CD4-positive, alpha-beta memory T cell (primary cell): ENCODE measurements at regions of chr1 and their contacts with region 1.

Region 1: DNA sequence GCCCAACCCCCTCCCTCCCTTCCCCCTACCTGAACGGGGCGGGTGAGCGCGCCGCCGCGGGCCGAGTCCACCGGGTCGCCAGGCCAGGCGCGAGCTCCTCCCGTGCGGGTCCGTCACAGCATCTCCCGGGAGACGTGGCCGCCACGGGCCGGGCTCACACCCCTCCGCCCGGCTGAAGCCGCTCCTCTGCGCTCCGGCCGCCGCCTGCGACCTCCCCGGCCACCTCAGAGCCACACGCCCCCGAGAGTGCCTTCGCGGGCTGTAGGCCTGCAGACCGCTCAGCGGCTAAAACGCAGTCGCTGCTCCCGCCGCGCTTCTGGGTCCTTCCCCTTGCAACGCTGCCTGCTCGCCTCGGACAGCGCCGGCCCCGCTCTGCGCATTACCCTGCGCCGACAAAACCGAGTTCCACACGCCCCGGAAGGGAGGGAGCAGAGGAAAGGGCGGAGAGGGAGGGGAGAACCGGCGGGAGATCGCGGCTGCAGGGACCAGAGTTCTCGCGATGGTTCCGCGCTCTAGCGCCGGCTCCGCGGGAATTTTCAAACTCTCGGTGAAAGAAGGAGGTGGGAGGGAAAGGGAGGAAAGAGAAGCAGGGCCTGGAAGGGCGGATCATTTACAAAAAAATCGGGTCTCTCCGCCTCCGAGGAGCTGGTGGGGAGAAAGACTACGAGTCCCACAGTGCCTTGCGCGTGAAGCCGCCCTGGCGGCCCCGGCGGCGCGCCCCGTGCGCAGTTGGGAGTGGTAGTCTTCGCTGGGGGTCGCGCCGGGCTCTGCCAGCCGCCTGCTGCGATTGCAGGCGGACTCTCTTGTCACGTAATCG is at the start of gene AHCTF1:
- DNase-seq: peak; percentile 95 to 97 (median 96)
- H3K4me3 ChIP-seq: peak within 1 kb of the TSS; percentile 78 to 89
- H3K4me3 Mint-ChIP-seq: peak within 1 kb of the TSS; percentile 93 to 97 (median 95)
- H3K27ac ChIP-seq: peak within 1 kb of the TSS; percentile 76
- H3K27ac Mint-ChIP-seq: peak within 1 kb of the TSS; percentile 96 to 99 (median 97)
- H3K4me1 ChIP-seq: peaks cover 37% of the 10 kb centered on the region
- H3K4me1 Mint-ChIP-seq: peaks cover 22 to 46% (median 34%) of the 10 kb centered on the region in 4 donors
- H3K27me3 ChIP-seq: no peaks in the 10 kb centered on the region
- H3K27me3 Mint-ChIP-seq: no peaks in the 10 kb centered on the region
- total RNA-seq, gene AHCTF1: 55.1 to 59.0 TPM

Region 2: GRCh38 chr1:246566128-246566812 is 365.5 kb before region 1 on chr1 and contains the starts of genes CNST and TFB2M:
- CTCF ChIA-PET with region 1: no interaction called
- POLR2A ChIA-PET with region 1: interaction called, 3 read pairs
- intact Hi-C with region 1: loop called (anchors 1 kb)
- DNase-seq: peak; percentile 89 to 93 (median 91)
- H3K4me3 ChIP-seq: peak within 1 kb of the TSS; percentile 84 to 99
- H3K4me3 Mint-ChIP-seq: peak within 1 kb of the TSS; percentile 97 to 99 (median 98)
- H3K27ac ChIP-seq: peak within 1 kb of the TSS; percentile 92
- H3K27ac Mint-ChIP-seq: peak within 1 kb of the TSS; percentile 89 to 99 (median 97)
- H3K4me1 ChIP-seq: peaks cover 61% of the 10 kb centered on the region
- H3K4me1 Mint-ChIP-seq: peaks cover 29 to 68% (median 46%) of the 10 kb centered on the region in 4 donors
- H3K27me3 ChIP-seq: no peaks in the 10 kb centered on the region
- H3K27me3 Mint-ChIP-seq: no peaks in the 10 kb centered on the region
- total RNA-seq, gene CNST: 97.8 to 103 TPM
- total RNA-seq, gene TFB2M: 8.8 to 9.6 TPM

Region 3: GRCh38 chr1:247078261-247079140 is 146.7 kb after region 1 on chr1 and contains the start of gene ZNF670:
- CTCF ChIA-PET with region 1: no interaction called
- POLR2A ChIA-PET with region 1: interaction called, 4 read pairs
- intact Hi-C with region 1: loop called (anchors 1 kb)
- DNase-seq: peak; percentile 70 to 86 (median 72)
- H3K4me3 ChIP-seq: peak within 1 kb of the TSS; percentile 67 to 73
- H3K4me3 Mint-ChIP-seq: peak within 1 kb of the TSS; percentile 89 to 94 (median 92)
- H3K27ac ChIP-seq: peak within 1 kb of the TSS; percentile 64
- H3K27ac Mint-ChIP-seq: peak within 1 kb of the TSS; percentile 75 to 91 (median 87)
- H3K4me1 ChIP-seq: peaks cover 16% of the 10 kb centered on the region
- H3K4me1 Mint-ChIP-seq: peaks cover 16 to 38% (median 23%) of the 10 kb centered on the region in 4 donors
- H3K27me3 ChIP-seq: no peaks in the 10 kb centered on the region
- H3K27me3 Mint-ChIP-seq: peaks cover 3 to 4% of the 10 kb centered on the region in 2 donors
- total RNA-seq, gene ZNF670: 2.9 to 3.3 TPM

Region 4: GRCh38 chr1:247103859-247104591 is 172.3 kb after region 1 on chr1 and contains the start of gene ZNF669:
- CTCF ChIA-PET with region 1: no interaction called
- POLR2A ChIA-PET with region 1: interaction called, 7 read pairs
- intact Hi-C with region 1: loop called (anchors 1 kb)
- DNase-seq: peak; percentile 87 to 92 (median 89)
- H3K4me3 ChIP-seq: peak within 1 kb of the TSS; percentile 59 to 87
- H3K4me3 Mint-ChIP-seq: peak within 1 kb of the TSS; percentile 88 to 93 (median 90)
- H3K27ac ChIP-seq: peak within 1 kb of the TSS; percentile 49
- H3K27ac Mint-ChIP-seq: peak within 1 kb of the TSS; percentile 75 to 90 (median 83)
- H3K4me1 ChIP-seq: peaks cover 13% of the 10 kb centered on the region
- H3K4me1 Mint-ChIP-seq: peaks cover 9 to 25% (median 17%) of the 10 kb centered on the region in 4 donors
- H3K27me3 ChIP-seq: no peaks in the 10 kb centered on the region
- H3K27me3 Mint-ChIP-seq: peaks cover 18 to 19% of the 10 kb centered on the region in 2 donors
- total RNA-seq, gene ZNF669: 12.0 to 14.7 TPM

Region 5: DNA sequence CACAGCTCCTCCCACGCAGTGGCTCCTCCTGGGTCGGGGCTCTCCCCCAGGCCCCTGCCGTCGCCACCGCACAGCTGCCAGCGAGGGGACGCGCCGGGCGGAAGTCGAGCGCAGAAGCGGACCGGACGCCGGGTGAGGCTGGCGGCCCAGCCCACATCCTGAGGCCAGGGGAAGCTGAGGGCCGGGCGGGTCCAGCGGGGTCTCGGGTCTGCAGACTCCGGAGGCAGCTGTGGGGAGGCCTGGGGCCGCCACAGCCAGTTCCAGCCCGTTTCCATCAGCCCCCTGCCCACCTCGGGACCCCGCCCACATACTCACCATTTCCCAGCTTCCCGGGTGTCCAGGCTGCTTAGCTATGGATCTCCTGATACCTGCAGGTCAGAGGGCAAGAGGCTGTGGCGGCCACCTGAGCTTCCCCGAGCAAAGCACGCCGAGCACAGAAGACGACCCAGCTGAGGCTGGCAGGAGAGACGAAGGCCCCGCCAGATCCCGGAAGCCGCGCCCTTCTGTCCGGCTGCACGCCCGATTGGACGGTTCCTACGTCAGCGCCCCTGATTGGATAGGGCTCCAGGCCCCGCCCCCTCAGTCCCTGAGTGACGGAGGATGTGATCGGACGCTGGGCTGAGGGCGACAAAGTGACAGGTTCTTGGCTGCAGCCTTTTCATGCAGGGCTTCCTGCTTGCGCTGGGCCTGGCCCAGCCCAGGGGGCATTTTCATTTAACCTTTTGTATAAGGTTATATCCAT is 278.8 kb after region 1 on chr1:
- CTCF ChIA-PET with region 1: no interaction called
- POLR2A ChIA-PET with region 1: interaction called, 4 read pairs
- intact Hi-C with region 1: loop called (anchors 2 kb)
- DNase-seq: peak; percentile 91 to 93 (median 92)
- H3K4me3 ChIP-seq: peak overlapping the region; percentile 66 to 70
- H3K4me3 Mint-ChIP-seq: peak overlapping the region; percentile 94 to 97 (median 95)
- H3K27ac ChIP-seq: peak overlapping the region; percentile 76
- H3K27ac Mint-ChIP-seq: peak overlapping the region; percentile 95 to 97 (median 95)
- H3K4me1 ChIP-seq: peaks cover 70% of the 10 kb centered on the region
- H3K4me1 Mint-ChIP-seq: peaks cover 50 to 74% (median 64%) of the 10 kb centered on the region in 4 donors
- H3K27me3 ChIP-seq: no peaks in the 10 kb centered on the region
- H3K27me3 Mint-ChIP-seq: no peaks in the 10 kb centered on the region

Region 6: GRCh38 chr1:247331172-247331991 is 399.6 kb after region 1 on chr1 and contains the start of gene ZNF496:
- CTCF ChIA-PET with region 1: no interaction called
- POLR2A ChIA-PET with region 1: no interaction called
- intact Hi-C with region 1: loop called (anchors 2 kb)
- DNase-seq: peak; percentile 52 to 68 (median 59)
- H3K4me3 ChIP-seq: peak within 1 kb of the TSS; percentile 28 to 69
- H3K4me3 Mint-ChIP-seq: peak within 1 kb of the TSS; percentile 92 to 98 (median 93)
- H3K27ac ChIP-seq: peak within 1 kb of the TSS; percentile 31
- H3K27ac Mint-ChIP-seq: peak within 1 kb of the TSS; percentile 29 to 93 (median 64)
- H3K4me1 ChIP-seq: peaks cover 16% of the 10 kb centered on the region
- H3K4me1 Mint-ChIP-seq: peaks cover 1 to 19% (median 13%) of the 10 kb centered on the region in 4 donors
- H3K27me3 ChIP-seq: no peaks in the 10 kb centered on the region
- H3K27me3 Mint-ChIP-seq: no peaks in the 10 kb centered on the region
- total RNA-seq, gene ZNF496: 11.3 to 12.4 TPM

Region 7: DNA sequence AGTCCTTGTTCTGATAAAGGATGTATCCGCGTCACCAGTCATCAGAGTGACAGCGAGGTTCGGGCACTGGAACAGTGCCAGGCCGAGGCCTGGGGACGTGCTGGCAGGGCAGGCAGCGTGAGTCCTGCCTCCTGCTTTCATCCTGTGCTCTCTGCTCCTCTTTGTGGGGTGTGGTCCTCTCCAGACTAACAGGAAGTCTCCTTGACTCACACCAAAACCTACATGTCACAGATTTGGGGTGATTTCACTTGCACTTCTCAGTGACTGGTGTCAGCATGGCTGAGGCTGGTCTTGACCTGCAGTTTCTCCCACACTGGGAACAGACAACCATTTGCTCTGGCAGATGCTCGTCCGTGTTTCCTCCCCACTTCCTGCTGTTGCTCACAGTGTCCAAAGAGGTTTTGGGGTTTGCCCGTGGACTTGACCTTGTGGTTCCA is 475.4 kb after region 1 on chr1:
- CTCF ChIA-PET with region 1: no interaction called
- POLR2A ChIA-PET with region 1: no interaction called
- intact Hi-C with region 1: loop called (anchors 5 kb)
- DNase-seq: peak; percentile 73 to 90 (median 78)
- H3K4me3 ChIP-seq: peak overlapping the region; percentile 54 to 57
- H3K4me3 Mint-ChIP-seq: peak overlapping the region; percentile 82 to 95 (median 88)
- H3K27ac ChIP-seq: peak overlapping the region; percentile 65
- H3K27ac Mint-ChIP-seq: peak overlapping the region; percentile 83 to 98 (median 95)
- H3K4me1 ChIP-seq: peaks cover 45% of the 10 kb centered on the region
- H3K4me1 Mint-ChIP-seq: peaks cover 29 to 46% (median 39%) of the 10 kb centered on the region in 4 donors
- H3K27me3 ChIP-seq: no peaks in the 10 kb centered on the region
- H3K27me3 Mint-ChIP-seq: no peaks in the 10 kb centered on the region